ENCODE measurements at regions of chr4 and their contacts with region 1.

Region 1: GRCh38 chr4:5812506-5813229 is 80.2 kb downstream of the CRMP1 start:
- DNase-seq: peak; percentile 24
- H3K4me3 ChIP-seq: no peak overlapping the region
- CTCF ChIP-seq: peak; percentile 62

Region 2: GRCh38 chr4:5708449-5709206 is 104.0 kb before region 1 on chr4 and contains the start of gene EVC2:
- CTCF ChIA-PET with region 1: interaction called, 10 read pairs
- POLR2A ChIA-PET with region 1: no interaction called
- DNase-seq: no peak
- H3K4me3 ChIP-seq: peak within 1 kb of the TSS; percentile 65
- CTCF ChIP-seq: no peak

Region 3: GRCh38 chr4:5824635-5825034 is 12.0 kb after region 1 on chr4:
- CTCF ChIA-PET with region 1: interaction called, 23 read pairs
- POLR2A ChIA-PET with region 1: no interaction called
- DNase-seq: no peak
- H3K4me3 ChIP-seq: no peak overlapping the region
- CTCF ChIP-seq: peak; percentile 74

Measured in AG04449 (cell line).